ENCODE measurements at regions of chr19 and their contacts with region 1.

Region 1: GRCh38 chr19:31089681-31090080 is 259.6 kb downstream of the TSHZ3 start:
- DNase-seq: no peak
- ATAC-seq: no peak

Region 2: DNA sequence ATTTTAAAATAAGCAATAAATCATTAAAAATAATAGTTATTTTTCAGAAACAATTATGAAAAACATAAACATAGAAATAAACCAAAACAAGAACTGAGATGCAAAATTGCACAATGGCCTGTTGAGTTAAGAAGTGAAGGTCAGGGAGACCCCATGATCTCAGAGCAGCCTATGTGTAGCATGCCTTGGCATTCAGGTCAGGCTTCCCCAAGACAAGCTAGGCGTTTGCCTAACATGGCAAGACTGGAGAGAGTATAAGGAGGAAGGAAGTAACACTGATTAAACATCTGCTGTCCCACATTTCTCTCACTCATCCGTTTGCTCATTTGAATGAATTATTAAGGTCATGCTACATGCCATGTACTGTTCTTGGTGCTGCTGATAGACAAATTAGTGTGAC is 32.2 kb before region 1 on chr19:
- intact Hi-C with region 1: loop called in 1 of 2 experiments (anchors 2 kb)
- DNase-seq: no peak
- ATAC-seq: no peak

Region 3: GRCh38 chr19:31149441-31149941 is 59.8 kb after region 1 on chr19:
- intact Hi-C with region 1: no loop called
- DNase-seq: no peak
- ATAC-seq: no peak